Adrenal gland (tissue), 19 donors: ENCODE measurements at regions of chr17 and their contacts with region 1.

Region 1: DNA sequence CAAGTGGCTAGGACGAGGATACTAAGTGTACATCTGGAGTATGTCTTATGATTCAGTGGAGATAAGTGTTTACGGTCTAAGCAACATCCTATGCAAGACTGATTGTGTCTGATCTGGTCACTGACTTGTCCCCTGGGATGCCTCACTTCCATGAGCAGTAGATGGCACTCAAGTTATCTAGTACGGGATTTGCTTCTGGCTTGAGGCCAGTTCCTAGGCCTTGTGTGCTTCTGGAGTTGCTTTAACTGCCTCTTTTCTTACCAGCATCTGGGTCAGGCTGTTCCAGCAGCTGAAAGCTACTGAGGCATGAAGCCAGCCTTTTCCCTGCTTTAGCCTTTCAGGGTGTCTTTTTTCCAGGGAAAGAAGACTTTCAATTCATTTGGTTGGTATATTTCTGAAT is 23.0 kb downstream of the SUPT6H start:
- DNase-seq: peak; percentile 78 to 95 (median 87)
- H3K4me3 ChIP-seq: no peak overlapping the region
- H3K27ac ChIP-seq: peak overlapping the region in 1 of 5 donors; percentile 2
- H3K4me1 ChIP-seq: peaks cover 3 to 8% of the 10 kb centered on the region in 2 donors
- H3K27me3 ChIP-seq: no peaks in the 10 kb centered on the region
- CTCF ChIP-seq: peak in 4 of 6 experiments; percentile 35 to 51 (median 42)
- POLR2A ChIP-seq: no peak

Region 2: GRCh38 chr17:28634206-28634856 is 50.6 kb before region 1 on chr17:
- intact Hi-C with region 1: loop called in 1 of 2 experiments (anchors 10 kb)
- DNase-seq: no peak
- H3K4me3 ChIP-seq: no peak overlapping the region
- H3K27ac ChIP-seq: no peak overlapping the region
- H3K4me1 ChIP-seq: no peaks in the 10 kb centered on the region
- H3K27me3 ChIP-seq: no peaks in the 10 kb centered on the region
- CTCF ChIP-seq: no peak
- POLR2A ChIP-seq: no peak

Region 3: DNA sequence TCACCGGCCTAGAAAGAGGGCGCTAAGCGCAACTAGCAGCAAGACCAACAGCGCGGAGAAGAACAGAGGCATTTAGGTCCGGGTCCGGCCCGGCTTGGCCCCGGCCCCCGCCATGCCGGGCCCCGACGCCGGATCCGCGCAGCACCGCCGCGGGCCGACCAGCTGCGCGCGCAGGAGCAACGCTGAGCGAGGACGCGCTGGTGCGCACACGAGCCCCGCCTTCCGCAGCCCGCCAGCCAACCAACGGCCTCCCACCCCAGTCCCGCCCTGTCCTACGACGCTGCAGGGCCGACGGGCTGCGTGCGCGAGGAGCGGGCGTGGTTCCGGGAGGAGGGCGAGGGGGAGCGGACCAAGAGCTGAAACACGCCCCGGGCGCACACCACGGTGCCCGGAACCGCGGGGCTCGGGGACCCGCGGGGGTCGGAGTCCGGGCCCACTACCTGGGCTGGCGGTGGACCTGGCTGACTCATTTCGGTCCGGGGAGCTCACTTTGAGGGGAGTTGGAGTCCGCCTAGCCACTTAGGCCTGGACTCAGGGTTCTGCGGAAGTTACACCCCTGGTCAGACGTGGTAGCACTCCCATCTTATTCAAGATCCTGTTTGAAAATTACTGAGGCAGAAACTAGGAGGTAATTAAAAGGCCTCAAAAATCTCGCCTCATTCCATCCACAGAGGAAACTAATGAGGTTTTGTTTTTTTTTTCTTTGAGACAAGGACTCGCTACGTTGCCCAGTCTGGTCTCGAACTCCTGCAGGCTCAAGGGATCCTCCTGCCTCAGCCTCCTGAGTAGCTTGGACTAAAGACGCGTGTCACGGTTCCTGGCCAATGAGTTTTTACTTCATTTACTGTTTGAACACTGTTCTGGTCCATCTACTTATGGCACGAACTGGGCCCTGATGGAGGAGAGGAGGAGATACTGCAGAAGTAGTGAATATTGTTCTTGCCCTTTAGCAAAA is 39.7 kb before region 1 on chr17 and contains the start of gene BLTP2:
- intact Hi-C with region 1: loop called in 1 of 2 experiments (anchors 5 kb)
- DNase-seq: peak; percentile 95 to 98 (median 96)
- H3K4me3 ChIP-seq: peak within 1 kb of the TSS; percentile 63 to 90 (median 89)
- H3K27ac ChIP-seq: peak within 1 kb of the TSS; percentile 87 to 99 (median 92)
- H3K4me1 ChIP-seq: peaks cover 30 to 54% of the 10 kb centered on the region in 2 donors
- H3K27me3 ChIP-seq: no peaks in the 10 kb centered on the region
- CTCF ChIP-seq: peak in 3 of 6 experiments; percentile 29 to 38 (median 32)
- POLR2A ChIP-seq: peak; percentile 64 to 90
- total RNA-seq, gene BLTP2: 93.1 to 228 (median 139) TPM